Activated CD8-positive, alpha-beta T cell treated with anti-CD3 and anti-CD28 coated beads, Interleukin-2, amount 10 ng/mL, durations not matched to agents 7 days and 5 days (primary cell): ENCODE measurements at regions of chr20 and their contacts with region 1.

Region 1: DNA sequence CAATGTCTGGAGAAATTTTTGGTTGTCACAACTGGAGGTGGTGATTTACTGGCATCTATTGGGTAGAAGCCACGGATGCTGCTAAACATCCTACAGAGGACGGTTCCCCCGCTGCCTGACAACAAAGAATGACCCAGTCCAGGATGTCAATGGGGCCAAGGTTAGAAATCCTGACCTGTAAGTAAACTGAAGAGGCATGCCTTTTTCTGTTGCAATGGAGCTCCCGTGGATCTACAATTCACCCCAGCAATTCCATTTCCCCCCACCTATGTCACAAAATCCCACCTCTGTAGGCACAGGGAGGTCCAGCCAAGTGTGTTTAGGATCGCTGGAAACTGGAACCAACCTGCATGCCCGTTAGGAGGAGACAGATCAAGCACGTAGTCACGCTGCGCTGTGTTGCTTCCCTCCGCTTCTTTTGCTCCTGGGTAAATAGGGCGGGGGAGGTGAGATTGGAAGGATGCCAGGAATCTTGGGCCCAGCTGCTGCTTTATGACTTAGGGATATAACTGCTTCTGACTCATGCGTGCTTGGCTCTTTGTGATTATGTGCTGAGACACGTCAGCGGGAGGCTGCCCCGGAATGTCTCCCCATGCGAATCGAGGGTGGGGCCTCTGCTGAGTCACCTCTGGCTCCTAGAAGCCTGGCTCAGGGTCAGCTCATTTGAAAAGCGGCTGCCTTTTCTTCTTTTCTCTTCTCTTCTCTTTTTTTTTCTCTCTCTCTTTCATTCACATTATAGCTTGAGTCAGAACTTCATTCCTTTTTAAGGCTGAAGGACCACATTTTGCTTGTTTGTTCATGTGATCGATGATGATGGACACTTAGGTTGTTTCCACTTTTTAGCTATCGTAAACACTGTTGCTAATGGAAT is 12.4 kb upstream of the PEDS1 start:
- DNase-seq: peak; percentile 79
- ATAC-seq: peak; percentile 95
- H3K4me3 Mint-ChIP-seq: peak overlapping the region; percentile 69
- H3K27ac Mint-ChIP-seq: peak overlapping the region; percentile 80
- H3K4me1 Mint-ChIP-seq: peaks cover 14% of the 10 kb centered on the region
- H3K27me3 Mint-ChIP-seq: peaks cover 2% of the 10 kb centered on the region

Region 2: DNA sequence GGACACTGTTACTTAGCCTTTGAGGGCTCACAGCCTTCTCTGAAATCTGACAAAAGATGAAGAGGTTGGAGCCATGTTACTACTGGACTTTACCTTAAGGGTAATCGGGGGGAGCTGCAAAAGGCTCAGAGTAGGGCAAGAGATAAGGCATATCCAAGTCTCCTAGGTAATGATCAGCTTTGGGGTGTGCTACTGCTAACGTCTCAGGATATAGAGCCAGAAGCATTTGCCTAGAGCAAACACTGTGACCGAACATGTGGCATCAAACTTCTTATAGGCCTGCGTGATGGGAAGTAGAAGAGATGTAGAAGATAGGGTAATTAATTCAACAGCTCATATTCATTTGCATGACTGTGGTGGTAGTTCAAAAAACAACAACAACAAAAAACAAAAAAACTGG is 64.0 kb before region 1 on chr20:
- CTCF ChIA-PET with region 1: interaction called, 11 read pairs
- POLR2A ChIA-PET with region 1: no interaction called
- DNase-seq: no peak
- ATAC-seq: no peak
- H3K4me3 Mint-ChIP-seq: no peak overlapping the region
- H3K27ac Mint-ChIP-seq: peak overlapping the region; percentile 1
- H3K4me1 Mint-ChIP-seq: peaks cover 28% of the 10 kb centered on the region
- H3K27me3 Mint-ChIP-seq: no peaks in the 10 kb centered on the region

Region 3: GRCh38 chr20:50146732-50147662 is 18.9 kb before region 1 on chr20:
- CTCF ChIA-PET with region 1: interaction called, 57 read pairs
- POLR2A ChIA-PET with region 1: no interaction called
- DNase-seq: peak; percentile 86
- ATAC-seq: peak; percentile 99
- H3K4me3 Mint-ChIP-seq: peak overlapping the region; percentile 78
- H3K27ac Mint-ChIP-seq: peak overlapping the region; percentile 98
- H3K4me1 Mint-ChIP-seq: peaks cover 68% of the 10 kb centered on the region
- H3K27me3 Mint-ChIP-seq: no peaks in the 10 kb centered on the region

Region 4: DNA sequence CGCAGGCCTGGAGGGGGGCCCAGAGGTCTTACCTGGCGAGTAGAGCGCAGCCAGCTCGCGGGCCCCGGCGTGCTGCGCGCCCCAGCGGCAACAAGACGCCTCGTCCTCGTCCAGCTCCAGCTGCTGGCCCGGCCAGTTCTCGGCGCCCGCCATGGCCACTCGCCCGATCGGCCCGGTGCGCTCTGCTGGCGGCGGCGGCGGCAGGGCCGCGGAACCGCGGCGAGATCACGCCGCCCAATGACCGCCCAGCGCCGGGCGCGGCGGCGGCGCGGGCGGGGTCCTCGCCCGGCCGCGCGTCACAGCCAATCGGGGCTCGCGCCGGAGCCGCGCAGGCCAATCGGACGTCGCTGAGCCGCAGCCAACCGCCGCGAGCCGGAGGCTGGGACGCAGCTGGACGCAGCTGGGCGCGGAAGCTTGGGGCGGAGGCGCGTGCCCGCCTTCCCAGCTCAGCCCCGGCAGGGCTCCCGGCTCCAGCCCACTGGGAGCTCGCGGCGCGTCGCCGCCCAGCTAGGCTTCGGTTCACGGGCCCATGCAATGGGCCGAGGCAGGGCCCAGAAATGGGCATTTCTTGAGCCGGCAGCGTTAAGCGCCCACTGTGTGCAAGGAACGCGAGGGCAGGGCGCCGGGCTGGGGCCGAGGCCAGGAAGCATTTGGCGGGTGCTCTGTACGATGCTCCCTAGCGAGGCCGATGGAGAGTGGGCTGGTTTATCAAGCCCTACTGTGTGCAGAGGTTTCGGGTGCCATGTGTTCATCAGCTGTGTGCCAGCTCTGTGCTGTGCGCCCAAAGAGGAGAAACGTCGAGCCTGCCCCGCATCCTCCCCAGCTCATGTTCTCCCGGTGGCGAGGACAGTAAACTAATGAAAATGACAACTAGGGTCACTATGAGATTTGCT is 12.2 kb before region 1 on chr20 and contains the start of gene PEDS1:
- CTCF ChIA-PET with region 1: interaction called, 57 read pairs
- POLR2A ChIA-PET with region 1: interaction called, 18 read pairs
- DNase-seq: peak; percentile 87
- ATAC-seq: peak; percentile 99
- H3K4me3 Mint-ChIP-seq: peak within 1 kb of the TSS; percentile 78
- H3K27ac Mint-ChIP-seq: peak within 1 kb of the TSS; percentile 84
- H3K4me1 Mint-ChIP-seq: peaks cover 43% of the 10 kb centered on the region
- H3K27me3 Mint-ChIP-seq: no peaks in the 10 kb centered on the region
- total RNA-seq, gene PEDS1: 28.7 to 30.2 TPM

Region 5: GRCh38 chr20:50179507-50180016 is 13.6 kb after region 1 on chr20:
- CTCF ChIA-PET with region 1: interaction called, 34 read pairs
- POLR2A ChIA-PET with region 1: no interaction called
- DNase-seq: no peak
- ATAC-seq: no peak
- H3K4me3 Mint-ChIP-seq: no peak overlapping the region
- H3K27ac Mint-ChIP-seq: no peak overlapping the region
- H3K4me1 Mint-ChIP-seq: no peaks in the 10 kb centered on the region
- H3K27me3 Mint-ChIP-seq: peaks cover 15% of the 10 kb centered on the region